Left cardiac atrium (tissue), 4 donors: ENCODE measurements at regions of chr7 and their contacts with region 1.

Region 1: DNA sequence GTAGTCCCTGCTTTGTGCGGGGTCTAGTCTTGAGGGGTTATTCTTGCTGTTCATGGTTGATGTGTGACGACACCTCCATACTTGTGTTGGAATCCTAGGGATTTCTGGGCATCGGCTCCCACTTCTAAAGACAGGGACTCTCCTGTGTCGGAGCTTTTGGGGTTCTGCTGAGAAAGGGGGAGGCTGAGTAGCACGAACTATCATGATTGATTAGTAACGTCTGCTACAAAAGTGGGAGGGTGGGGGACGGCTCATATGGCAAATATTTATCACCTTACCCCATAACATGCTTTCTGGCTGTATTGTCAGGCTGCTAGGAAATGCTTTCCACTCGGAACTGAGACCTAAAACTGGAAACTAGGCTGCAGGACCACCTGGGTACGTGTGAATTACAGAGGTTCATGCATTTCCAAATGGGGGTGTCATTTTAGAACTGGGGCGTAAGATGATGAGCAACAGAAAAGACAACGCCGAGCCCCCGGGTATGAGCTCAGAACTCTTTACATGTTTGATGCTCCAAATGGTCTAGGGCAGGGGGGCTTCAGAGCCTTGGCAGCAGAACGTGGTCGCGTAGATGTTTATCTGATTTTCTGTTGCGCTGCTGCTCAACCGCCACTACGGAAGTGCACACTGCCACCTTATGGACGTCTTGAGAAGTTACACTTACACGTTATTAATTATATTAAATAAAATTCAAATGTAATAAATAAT is 15.1 kb upstream of the NME8 start:
- DNase-seq: peak; percentile 36
- ATAC-seq: peak in 1 of 2 donors; percentile 56

Region 2: GRCh38 chr7:37510043-37510634 is 323.1 kb before region 1 on chr7:
- intact Hi-C with region 1: loop called in 1 of 2 experiments (anchors 5 kb)
- DNase-seq: no peak
- ATAC-seq: no peak

Region 3: DNA sequence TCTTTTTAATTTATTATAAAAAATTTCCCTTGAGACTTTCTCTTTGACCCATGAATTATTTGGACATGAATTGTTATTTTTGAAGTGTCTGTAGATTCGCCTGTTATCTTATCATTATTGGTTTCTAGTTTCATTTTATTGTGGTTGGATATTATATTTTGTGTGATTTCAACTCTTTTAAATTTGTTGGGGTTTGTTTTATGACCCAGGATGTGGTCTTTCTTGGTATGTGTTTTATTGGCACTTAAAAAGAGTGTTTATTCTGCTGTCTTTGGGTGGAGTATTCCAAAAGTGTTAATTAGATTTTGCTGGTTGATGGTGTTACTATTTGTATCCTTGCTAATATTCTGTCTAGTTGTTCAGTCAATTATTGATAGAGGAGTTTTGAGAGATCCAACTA is 200.2 kb before region 1 on chr7:
- intact Hi-C with region 1: loop called (anchors 5 to 10 kb)
- DNase-seq: no peak
- ATAC-seq: no peak